Heart right ventricle (tissue), 16 donors: ENCODE measurements at regions of chr15 and their contacts with region 1.

Region 1: DNA sequence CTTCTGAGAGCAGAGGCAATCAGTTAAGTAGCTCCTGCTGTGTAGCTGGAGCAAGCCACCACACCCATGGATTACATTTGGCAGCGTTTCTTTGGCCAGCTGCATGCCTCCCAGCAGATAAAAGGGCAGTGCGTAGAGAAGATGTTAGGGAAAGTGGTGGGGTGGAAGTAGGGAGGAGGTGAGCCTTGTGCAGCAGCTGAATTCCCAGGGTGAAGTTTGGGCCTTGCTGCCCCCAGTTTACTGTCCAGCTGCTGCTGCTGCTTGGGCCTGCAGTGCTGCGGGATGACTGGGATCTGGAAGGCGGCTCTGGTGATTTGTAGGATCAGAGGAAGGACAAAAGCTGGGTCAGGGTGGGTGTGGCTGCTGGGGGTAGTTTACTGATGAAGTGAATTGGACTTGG is 318.7 kb upstream of the C2CD4B start:
- DNase-seq: peak; percentile 34 to 45
- ATAC-seq: peak; percentile 39 to 92 (median 84)
- H3K4me3 ChIP-seq: no peak overlapping the region
- H3K27ac ChIP-seq: peak overlapping the region in 8 of 10 donors; percentile 5 to 57 (median 29)
- H3K4me1 ChIP-seq: peaks cover 5 to 30% (median 26%) of the 10 kb centered on the region in 9 donors
- H3K27me3 ChIP-seq: no peaks in the 10 kb centered on the region
- CTCF ChIP-seq: no peak

Region 2: GRCh38 chr15:62378772-62379498 is 104.9 kb before region 1 on chr15:
- intact Hi-C with region 1: no loop called
- DNase-seq: no peak
- ATAC-seq: no peak
- H3K4me3 ChIP-seq: no peak overlapping the region
- H3K27ac ChIP-seq: no peak overlapping the region
- H3K4me1 ChIP-seq: peaks cover 0 to 14% (median 0%) of the 10 kb centered on the region in 9 donors
- H3K27me3 ChIP-seq: peaks cover 0 to 8% (median 0%) of the 10 kb centered on the region in 7 donors
- CTCF ChIP-seq: no peak

Region 3: GRCh38 chr15:62533687-62534086 is 49.9 kb after region 1 on chr15:
- intact Hi-C with region 1: loop called in 1 of 10 experiments (anchors 1 kb)
- DNase-seq: no peak
- ATAC-seq: peak in 3 of 8 donors; percentile 14 to 29 (median 18)
- H3K4me3 ChIP-seq: no peak overlapping the region
- H3K27ac ChIP-seq: no peak overlapping the region
- H3K4me1 ChIP-seq: peaks cover 0 to 21% (median 14%) of the 10 kb centered on the region in 9 donors
- H3K27me3 ChIP-seq: no peaks in the 10 kb centered on the region
- CTCF ChIP-seq: no peak

Region 4: GRCh38 chr15:62545467-62546227 is 61.8 kb after region 1 on chr15:
- intact Hi-C with region 1: no loop called
- DNase-seq: peak; percentile 26 to 67
- ATAC-seq: peak; percentile 40 to 83 (median 70)
- H3K4me3 ChIP-seq: no peak overlapping the region
- H3K27ac ChIP-seq: peak overlapping the region in 9 of 10 donors; percentile 59 to 83 (median 70)
- H3K4me1 ChIP-seq: peaks cover 19 to 79% (median 50%) of the 10 kb centered on the region in 9 donors
- H3K27me3 ChIP-seq: no peaks in the 10 kb centered on the region
- CTCF ChIP-seq: no peak